PC-3 (cell line): ENCODE measurements at regions of chr16 and their contacts with region 1.

Region 1: GRCh38 chr16:30091474-30092372 is at the start of gene TBX6:
- DNase-seq: peak; percentile 87
- ATAC-seq: peak; percentile 81
- H3K4me3 ChIP-seq: peak within 1 kb of the TSS; percentile 78
- H3K27ac ChIP-seq: peak within 1 kb of the TSS; percentile 89
- H3K4me1 ChIP-seq: peaks cover 31% of the 10 kb centered on the region
- H3K27me3 ChIP-seq: no peaks in the 10 kb centered on the region
- CTCF ChIP-seq: peak; percentile 60
- total RNA-seq, gene TBX6: 0.86 and 1.1 TPM in 2 replicates

Region 2: GRCh38 chr16:30117773-30118172 is 26.1 kb after region 1 on chr16:
- CTCF ChIA-PET with region 1: no interaction called
- POLR2A ChIA-PET with region 1: interaction called, 19 read pairs
- intact Hi-C with region 1: no loop called
- DNase-seq: no peak
- ATAC-seq: no peak
- H3K4me3 ChIP-seq: no peak overlapping the region
- H3K27ac ChIP-seq: no peak overlapping the region
- H3K4me1 ChIP-seq: peaks cover 11% of the 10 kb centered on the region
- H3K27me3 ChIP-seq: no peaks in the 10 kb centered on the region
- CTCF ChIP-seq: no peak

Region 3: GRCh38 chr16:30124985-30125379 is 33.3 kb after region 1 on chr16:
- CTCF ChIA-PET with region 1: interaction called, 13 read pairs
- POLR2A ChIA-PET with region 1: no interaction called
- intact Hi-C with region 1: no loop called
- DNase-seq: no peak
- ATAC-seq: no peak
- H3K4me3 ChIP-seq: no peak overlapping the region
- H3K27ac ChIP-seq: no peak overlapping the region; the same call in 1 of the 2 replicates
- H3K4me1 ChIP-seq: peaks cover 10% of the 10 kb centered on the region
- H3K27me3 ChIP-seq: no peaks in the 10 kb centered on the region
- CTCF ChIP-seq: no peak